AG04449 (cell line): ENCODE measurements at regions of chr20 and their contacts with region 1.

Region 1: DNA sequence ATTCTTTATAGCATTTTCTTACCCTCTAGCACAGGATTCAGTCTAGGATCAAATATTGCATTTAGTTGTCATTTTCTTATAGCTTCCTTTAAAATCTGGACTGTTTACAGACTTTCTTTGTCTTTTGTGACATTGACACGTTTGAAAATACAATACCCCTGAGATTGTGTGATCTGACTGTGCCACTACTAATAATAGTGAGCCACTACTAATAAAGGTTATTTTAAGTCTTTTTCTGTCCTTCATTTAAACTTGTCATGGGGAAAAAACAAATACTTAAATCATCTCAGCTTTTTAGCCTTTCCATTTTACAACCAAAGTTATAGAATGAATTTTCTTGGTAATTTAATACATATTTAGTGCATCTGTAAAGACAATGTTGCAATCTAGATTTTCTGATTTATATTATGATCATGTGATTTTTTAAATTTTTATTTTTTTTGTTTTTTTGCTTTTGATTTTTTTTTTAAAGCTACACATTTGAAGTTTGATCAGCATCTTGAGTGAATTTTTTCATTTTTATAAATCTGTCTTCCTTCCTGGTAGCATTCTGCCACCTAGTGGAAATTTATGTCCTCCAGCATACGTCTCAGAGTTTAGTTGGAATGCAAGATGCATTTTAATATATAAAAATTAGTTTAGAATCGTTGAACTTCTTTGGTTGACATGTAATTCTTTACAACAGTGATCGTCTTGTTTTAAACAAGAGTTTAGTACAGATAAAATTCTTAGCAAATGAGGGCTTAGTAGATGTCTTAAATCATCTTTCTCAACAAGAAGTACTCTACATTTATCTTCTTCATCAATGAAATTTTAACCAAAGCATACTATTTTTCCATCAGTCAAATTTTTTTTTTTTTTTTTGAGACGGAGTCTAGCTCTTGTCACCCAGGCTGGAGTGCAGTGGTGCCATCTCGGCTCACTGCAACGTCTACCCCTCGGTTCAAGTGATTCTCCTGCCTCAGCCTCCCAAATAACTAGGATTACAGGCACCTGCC is 119.4 kb downstream of the NCOA3 start:
- DNase-seq: no peak
- H3K4me3 ChIP-seq: no peak overlapping the region
- CTCF ChIP-seq: peak; percentile 46

Region 2: DNA sequence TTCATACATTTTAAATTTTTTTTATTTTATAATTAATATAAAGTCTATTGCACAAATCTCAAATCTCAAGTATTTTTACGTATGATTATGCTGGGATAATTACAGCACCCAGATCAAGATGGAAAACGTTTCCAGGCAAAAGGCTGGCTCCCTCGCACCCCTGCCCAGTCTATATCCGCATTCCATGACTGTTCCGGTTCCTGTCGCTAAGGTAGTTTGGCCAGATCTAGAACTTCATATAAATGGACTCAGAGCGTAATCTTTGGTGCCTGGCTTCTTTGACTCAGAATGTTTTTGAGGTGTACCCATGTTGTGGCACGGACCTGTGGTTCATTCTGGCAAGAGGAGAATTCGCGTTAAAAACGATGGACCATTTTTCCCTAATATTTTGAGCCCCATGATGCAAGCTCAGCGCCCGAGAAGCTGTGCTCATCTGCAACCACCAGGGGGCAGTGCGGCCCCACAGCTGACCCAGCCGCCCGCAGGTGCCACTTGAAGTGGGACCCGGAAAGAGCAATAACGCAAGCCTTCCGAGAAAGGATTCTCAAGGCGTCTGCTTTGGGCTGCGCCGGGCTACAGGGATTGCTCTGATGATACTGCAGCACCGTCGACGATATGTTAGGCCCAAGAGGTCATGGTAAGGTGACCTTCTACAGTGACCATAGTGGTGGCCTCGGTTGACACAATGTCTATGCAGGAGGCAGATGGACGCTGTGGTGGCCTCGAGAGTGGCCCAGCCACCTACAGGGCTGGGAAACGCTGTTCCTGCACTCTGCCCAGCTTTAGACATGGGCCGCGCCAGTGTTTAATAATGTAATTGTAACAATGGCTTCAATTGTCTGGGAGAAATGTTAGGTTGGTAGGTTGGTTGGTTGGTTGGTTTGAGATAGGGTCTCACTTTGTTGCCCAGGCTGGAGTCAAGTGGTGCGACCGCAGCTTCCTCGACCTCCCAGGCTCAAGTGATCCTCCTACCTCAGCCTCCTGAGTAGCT is 424.7 kb before region 1 on chr20:
- CTCF ChIA-PET with region 1: interaction called, 17 read pairs
- POLR2A ChIA-PET with region 1: no interaction called
- DNase-seq: no peak
- H3K4me3 ChIP-seq: no peak overlapping the region
- CTCF ChIP-seq: peak; percentile 88

Region 3: DNA sequence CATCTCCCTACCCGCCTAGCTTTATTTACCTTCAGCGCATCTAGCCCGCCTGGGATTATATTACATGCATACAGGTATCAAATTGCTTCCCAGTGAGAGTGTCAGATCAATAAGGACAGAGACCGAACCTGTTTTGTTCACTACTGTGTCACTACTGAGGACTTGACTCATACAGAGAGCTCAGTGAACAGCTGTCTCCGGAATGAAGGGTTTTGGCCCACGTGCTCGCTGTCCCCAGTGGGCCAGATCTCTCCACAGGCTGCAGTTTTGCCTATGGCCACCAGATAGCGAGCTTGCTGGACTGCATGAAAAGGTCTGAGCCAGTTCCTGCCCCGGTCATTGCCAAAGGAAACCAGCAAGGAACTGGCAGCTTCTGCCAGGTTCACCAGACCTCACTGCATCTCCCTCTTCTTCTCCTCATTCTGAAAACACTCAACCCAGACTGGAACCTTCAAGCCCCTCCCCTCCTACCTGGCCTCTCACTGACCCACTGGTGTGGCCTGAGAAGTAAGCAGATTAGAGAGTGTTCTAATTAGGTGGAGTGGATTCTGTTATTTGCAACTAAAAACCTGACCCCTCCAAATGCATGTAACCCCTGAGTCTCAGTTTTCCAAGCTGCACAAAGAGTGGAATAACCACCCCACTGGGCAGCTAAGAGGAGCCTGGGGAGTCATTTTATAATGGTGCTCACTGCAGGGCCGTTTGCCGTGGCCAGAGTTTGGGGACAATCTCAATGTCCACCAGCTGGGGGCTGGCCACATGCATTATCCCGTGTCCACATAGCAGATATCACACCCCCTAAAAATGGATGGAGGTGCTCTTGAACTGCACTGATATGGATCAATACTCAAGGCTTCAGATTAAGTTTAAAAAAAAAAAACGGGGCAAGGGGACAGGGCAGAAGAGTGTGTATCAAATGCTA is 415.3 kb before region 1 on chr20:
- CTCF ChIA-PET with region 1: interaction called, 10 read pairs
- POLR2A ChIA-PET with region 1: no interaction called
- DNase-seq: no peak
- H3K4me3 ChIP-seq: no peak overlapping the region
- CTCF ChIP-seq: peak; percentile 74

Region 4: DNA sequence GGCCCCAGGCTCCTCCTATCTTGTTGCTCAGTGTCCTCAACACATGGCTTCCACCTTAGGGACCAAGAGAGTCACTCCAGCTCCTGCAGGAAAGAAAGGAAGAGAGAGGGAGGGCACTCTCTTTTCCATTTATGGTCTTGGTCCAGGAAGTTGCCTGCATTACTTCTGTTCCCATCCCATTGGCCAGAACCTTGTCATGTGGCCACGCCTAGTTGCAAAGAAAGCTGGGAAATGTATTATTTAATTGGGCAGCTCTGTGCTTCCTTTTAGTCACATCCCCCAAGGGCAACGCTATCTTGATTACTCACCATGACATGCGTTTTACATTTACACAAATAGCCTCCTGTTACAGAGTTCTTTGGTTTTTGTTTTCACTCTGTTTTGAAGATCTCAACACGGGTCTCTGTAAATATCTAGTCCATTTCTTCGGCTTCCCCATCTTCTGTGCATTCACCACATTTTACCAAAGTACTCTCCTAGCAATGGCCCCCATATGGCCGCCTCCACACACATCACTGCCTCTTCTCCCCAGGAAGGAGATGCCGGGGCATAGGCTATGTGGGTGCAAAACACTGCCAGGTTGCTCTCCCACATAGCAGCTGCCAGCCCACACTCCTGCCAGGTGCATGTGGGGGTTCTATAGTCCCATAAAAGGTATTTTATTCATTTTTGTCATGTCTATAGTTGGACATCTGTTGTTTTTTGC is 228.9 kb before region 1 on chr20:
- CTCF ChIA-PET with region 1: interaction called, 16 read pairs
- POLR2A ChIA-PET with region 1: interaction called, 3 read pairs
- DNase-seq: peak; percentile 71
- H3K4me3 ChIP-seq: no peak overlapping the region
- CTCF ChIP-seq: no peak

Region 5: DNA sequence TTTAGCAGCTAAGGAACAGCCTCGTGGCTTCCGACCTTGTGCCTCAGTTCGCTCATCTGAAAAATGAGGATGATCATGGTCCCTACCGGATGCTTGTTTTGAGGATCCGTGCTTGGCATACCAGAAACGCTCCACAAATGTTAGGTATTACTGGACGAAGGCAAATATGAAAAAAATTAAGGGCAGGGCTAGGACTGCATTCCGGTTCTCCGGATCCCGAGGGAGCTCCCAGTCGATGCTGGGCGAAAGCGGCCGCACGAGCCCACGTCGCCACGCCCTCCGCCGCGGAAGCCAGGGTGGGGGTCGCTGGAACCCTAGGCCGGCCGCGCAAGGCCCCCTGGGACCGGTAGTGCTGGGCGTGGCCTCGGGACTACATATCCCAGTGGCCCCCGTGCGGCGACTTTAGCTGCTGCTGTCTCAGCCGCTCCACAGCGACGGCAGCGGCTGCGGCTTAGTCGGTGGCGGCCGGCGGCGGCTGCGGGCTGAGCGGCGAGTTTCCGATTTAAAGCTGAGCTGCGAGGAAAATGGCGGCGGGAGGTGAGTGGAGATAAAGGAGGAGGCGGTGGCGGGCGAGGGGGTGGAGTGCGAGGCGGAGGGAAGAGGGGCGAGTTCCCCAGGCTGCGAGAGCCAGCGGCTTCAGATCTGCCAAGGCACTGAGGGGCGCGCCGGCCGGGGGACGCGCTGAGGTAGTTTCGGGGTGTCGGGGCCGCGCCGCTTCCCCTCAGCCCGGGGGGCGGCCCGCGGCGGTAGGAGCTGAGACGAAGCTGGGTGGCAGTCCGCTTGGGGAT is 119.4 kb before region 1 on chr20 and contains the start of gene NCOA3:
- CTCF ChIA-PET with region 1: interaction called, 20 read pairs
- POLR2A ChIA-PET with region 1: interaction called, 3 read pairs
- DNase-seq: peak; percentile 64
- H3K4me3 ChIP-seq: peak within 1 kb of the TSS; percentile 82
- CTCF ChIP-seq: peak; percentile 68

Region 6: GRCh38 chr20:47600967-47601547 is 20.1 kb before region 1 on chr20:
- CTCF ChIA-PET with region 1: interaction called, 18 read pairs
- POLR2A ChIA-PET with region 1: no interaction called
- DNase-seq: no peak
- H3K4me3 ChIP-seq: no peak overlapping the region
- CTCF ChIP-seq: no peak

Region 7: DNA sequence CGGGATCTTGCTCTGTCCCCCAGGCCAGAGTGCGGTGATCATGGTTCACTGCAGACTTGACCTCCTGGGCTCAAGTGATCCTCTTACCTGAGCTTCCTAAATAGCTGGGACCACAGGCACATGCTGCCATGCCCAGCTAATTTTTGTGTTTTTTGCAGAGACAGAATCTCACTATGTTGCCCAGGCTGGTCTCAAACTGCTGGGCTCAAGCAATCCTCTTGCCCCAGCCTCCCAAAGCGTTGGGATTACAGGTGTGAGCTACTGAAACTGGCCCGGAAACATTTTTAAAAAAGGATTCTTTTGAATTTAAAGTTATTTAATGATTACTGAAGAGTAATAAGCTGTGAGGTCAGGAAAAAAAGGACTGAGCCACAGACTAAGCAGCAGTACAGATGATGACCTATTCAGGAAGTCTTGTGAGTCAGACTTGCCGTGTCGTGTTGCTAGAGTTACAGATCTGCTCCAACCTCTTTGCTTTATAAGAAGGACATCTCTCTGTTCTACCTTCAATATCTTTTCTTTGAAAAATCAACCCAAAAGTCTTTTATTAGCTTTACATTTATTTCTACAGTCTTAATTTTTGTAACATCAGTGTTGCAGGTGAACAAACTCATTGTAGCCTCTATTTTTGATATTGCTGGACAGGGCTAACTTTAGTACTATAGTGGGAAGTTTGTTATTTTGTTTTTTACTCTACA is 10.7 kb before region 1 on chr20:
- CTCF ChIA-PET with region 1: interaction called, 34 read pairs
- POLR2A ChIA-PET with region 1: no interaction called
- DNase-seq: peak; percentile 50
- H3K4me3 ChIP-seq: no peak overlapping the region
- CTCF ChIP-seq: no peak